ENCODE measurements at regions of chr9 and their contacts with region 1.

Region 1: DNA sequence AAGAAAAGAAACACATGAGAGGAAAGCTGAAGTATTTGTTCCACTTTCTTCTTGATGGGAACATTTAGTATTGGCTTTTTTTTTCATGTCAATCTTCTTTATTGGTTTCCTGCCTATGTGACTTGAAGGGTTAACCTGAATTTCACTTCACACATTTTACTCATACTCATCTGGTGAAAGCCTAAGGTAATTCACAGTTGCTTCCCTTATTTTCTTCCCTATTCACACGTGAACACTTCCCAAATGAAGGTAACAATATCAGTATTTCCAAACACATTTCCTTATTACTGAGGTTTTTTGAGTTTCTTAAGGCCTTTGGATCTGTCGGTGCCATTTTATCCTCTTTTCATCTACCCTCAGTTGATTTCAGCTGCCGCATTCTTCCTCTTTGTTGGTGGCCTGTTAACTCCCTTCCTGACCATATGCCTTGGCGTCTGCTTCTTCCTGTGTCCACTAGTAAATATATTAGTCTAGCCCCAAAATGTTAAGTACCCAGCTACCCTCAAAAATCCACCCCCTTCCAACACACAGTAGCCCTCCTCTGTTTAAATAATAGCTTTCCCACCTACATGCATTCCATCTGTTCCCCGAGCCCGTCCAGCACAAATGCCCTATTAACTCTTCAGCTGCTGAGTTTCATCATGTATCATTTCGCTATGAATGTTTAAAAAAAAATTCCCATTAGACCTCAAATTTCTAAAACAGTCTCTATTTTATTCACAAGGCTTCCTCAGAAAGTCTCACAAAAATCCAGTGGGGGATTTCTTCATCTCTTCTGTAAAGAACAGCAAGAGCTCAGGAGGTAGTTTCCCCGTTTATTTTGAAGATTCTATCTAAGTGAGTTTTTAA is 97.3 kb downstream of the USP20 start:
- DNase-seq: no peak
- H3K4me3 Mint-ChIP-seq: peak overlapping the region; percentile 78
- H3K27ac Mint-ChIP-seq: peak overlapping the region; percentile 93
- H3K4me1 Mint-ChIP-seq: peaks cover 56% of the 10 kb centered on the region
- H3K27me3 Mint-ChIP-seq: no peaks in the 10 kb centered on the region

Region 2: DNA sequence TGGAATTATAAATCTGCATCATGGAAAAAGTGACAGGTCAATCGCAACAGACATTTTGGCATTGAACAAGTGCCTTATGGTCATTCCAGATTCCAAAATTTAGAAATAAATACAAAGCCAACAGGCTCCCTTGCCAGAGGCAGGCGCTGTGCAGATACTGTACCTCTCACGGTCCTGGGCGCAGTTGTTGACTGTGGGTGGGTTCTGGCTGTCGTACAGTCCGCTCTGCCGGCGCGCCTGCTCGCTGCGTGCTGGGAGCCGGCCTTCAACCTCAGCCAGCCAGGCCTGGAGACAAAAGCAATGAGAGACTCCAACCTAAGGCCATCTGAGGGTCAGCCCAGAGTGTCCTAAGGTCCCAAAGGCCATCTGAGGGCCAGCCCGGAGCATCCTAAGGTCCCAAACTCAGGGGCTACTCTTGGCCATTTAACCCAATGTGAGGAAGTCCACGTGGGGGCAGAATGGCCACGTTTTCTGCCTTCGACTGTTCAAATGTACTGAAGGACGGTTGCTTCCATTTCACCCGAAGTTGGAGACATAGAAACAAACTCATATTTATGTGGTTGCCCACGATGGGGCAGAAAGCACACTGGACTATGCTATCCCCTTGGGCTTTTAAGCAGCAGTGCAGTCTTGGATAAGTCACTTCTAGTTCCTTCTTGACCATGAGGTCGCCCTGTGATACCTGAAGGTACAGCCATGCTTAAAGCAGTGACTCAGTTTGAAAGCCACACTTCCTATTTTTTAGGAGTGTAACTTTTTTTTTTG is 32.1 kb before region 1 on chr9:
- intact Hi-C with region 1: no loop called
- DNase-seq: no peak
- H3K4me3 Mint-ChIP-seq: no peak overlapping the region
- H3K27ac Mint-ChIP-seq: peak overlapping the region; percentile 77
- H3K4me1 Mint-ChIP-seq: peaks cover 52% of the 10 kb centered on the region
- H3K27me3 Mint-ChIP-seq: no peaks in the 10 kb centered on the region

Region 3: GRCh38 chr9:129944506-129945116 is 12.1 kb after region 1 on chr9:
- intact Hi-C with region 1: loop called (anchors 1 kb)
- DNase-seq: peak; percentile 87
- H3K4me3 Mint-ChIP-seq: peak overlapping the region; percentile 35
- H3K27ac Mint-ChIP-seq: peak overlapping the region; percentile 90
- H3K4me1 Mint-ChIP-seq: peaks cover 35% of the 10 kb centered on the region
- H3K27me3 Mint-ChIP-seq: no peaks in the 10 kb centered on the region

Region 4: GRCh38 chr9:129962889-129963703 is 30.6 kb after region 1 on chr9:
- intact Hi-C with region 1: loop called (anchors 2 kb)
- DNase-seq: peak; percentile 93
- H3K4me3 Mint-ChIP-seq: peak overlapping the region; percentile 84
- H3K27ac Mint-ChIP-seq: peak overlapping the region; percentile 94
- H3K4me1 Mint-ChIP-seq: peaks cover 68% of the 10 kb centered on the region
- H3K27me3 Mint-ChIP-seq: no peaks in the 10 kb centered on the region

Region 5: DNA sequence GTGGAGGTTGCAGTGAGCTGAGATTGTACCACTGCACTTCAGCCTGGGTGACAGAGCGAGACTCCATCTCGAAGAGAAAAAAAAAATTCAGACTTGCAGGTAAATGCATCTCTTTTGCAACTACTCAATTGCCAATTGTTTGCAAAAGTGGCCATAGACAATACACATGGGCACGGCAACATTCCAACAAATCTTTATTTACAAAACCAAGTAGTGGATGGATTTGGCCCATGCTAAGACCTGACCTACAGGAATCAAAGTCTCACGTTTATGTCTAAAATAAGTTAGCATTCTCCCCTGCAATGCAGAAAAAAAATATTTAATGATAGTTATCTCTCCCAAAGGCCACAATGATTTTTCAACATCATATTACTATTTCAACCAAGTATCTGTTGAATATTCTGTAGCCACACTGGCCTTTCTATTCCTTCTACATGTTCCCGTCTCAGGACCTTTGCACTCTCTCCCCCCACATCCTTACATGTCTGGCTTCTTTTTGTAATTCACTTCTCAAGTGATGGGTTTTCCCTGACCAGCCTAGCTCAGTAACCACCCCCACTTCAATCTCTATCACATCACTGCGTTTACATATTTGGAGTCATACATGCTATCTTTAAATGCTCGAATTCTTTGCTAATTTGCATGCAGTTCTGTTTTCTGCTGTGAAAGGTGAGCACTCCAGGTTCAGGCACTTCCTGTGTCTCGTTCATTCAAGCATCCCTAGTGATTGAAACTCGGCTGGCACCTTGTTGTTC is 56.3 kb after region 1 on chr9:
- intact Hi-C with region 1: loop called (anchors 1 kb)
- DNase-seq: peak; percentile 66
- H3K4me3 Mint-ChIP-seq: peak overlapping the region; percentile 31
- H3K27ac Mint-ChIP-seq: peak overlapping the region; percentile 92
- H3K4me1 Mint-ChIP-seq: peaks cover 49% of the 10 kb centered on the region
- H3K27me3 Mint-ChIP-seq: no peaks in the 10 kb centered on the region

Region 6: GRCh38 chr9:130029223-130029973 is 96.9 kb after region 1 on chr9:
- intact Hi-C with region 1: loop called (anchors 2 kb)
- DNase-seq: peak; percentile 75
- H3K4me3 Mint-ChIP-seq: peak overlapping the region; percentile 71
- H3K27ac Mint-ChIP-seq: peak overlapping the region; percentile 92
- H3K4me1 Mint-ChIP-seq: peaks cover 74% of the 10 kb centered on the region
- H3K27me3 Mint-ChIP-seq: no peaks in the 10 kb centered on the region

Region 7: GRCh38 chr9:130042833-130043653 is 110.5 kb after region 1 on chr9 and contains the start of gene FNBP1:
- intact Hi-C with region 1: loop called (anchors 2 kb)
- DNase-seq: peak; percentile 94
- H3K4me3 Mint-ChIP-seq: peak within 1 kb of the TSS; percentile 94
- H3K27ac Mint-ChIP-seq: peak within 1 kb of the TSS; percentile 93
- H3K4me1 Mint-ChIP-seq: peaks cover 39% of the 10 kb centered on the region
- H3K27me3 Mint-ChIP-seq: no peaks in the 10 kb centered on the region
- total RNA-seq, gene FNBP1: 245 TPM in 2 replicates

Measured in activated CD4-positive, alpha-beta T cell treated with anti-CD3 and anti-CD28 coated beads, Interleukin-2, amount 10 ng/mL, durations not matched to agents 24 days and 14 days (primary cell).